ENCODE measurements at regions of chr6 and their contacts with region 1.

Region 1: DNA sequence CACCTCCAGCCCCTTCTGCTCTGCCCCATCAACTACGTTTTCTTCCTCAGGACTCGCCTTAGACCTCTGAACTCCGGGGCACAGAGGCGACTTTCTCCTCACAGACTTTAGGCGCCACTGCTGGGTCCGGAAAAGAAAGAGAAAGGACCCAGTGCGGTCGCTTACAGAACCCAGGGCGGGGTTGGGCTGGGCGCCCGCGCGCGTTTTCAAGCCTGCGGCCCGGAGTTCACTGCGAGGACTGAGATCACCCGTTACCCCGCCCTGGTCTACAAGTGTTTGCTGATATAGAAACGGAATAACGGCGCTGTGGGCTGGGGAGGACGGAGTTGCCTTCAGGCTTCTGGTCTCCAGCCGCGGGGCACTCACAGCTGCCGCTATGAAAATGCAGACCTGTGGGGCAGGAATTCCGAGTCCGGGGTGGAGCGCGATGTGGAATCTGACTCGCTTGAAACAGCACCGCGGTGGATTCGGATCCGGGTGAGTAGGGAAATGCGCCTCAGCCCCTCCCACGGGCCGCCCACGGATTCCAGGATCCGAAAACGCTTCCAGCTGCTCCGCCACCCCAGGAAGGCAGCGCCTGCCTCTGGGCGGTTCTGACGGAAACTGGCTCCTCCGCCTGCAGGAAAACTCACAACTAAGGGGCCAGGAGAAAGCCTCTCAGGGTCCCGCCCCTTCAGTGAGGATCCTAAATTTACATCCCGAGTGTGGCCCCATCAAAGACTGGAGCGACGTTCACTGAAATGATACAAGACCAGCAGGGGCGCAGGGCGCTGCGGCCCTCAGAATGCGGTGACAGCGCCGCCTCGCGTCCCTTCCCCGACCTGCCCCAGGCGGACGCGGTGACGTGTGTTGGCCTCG is 29.4 kb downstream of the HLA-F start:
- DNase-seq: peak; percentile 84
- ATAC-seq: peak; percentile 80
- H3K4me3 ChIP-seq: peak overlapping the region; percentile 50
- H3K27ac ChIP-seq: peak overlapping the region; percentile 66
- H3K4me1 ChIP-seq: peaks cover 2% of the 10 kb centered on the region; the same call in 1 of the 2 replicates
- H3K27me3 ChIP-seq: peaks cover 19% of the 10 kb centered on the region
- CTCF ChIP-seq: peak; percentile 99
- POLR2A ChIP-seq: peak; percentile 26; the same call in 1 of the 2 replicates
- RAD21 ChIP-seq: peak; percentile 68

Region 2: GRCh38 chr6:29632789-29633533 is 119.7 kb before region 1 on chr6 and contains the start of gene GABBR1:
- CTCF ChIA-PET with region 1: no interaction called
- POLR2A ChIA-PET with region 1: no interaction called
- dilution Hi-C with region 1: no loop called
- in situ Hi-C with region 1: no loop called
- intact Hi-C with region 1: loop called (anchors 5 kb)
- DNase-seq: peak; percentile 79
- ATAC-seq: peak; percentile 90
- H3K4me3 ChIP-seq: peak within 1 kb of the TSS; percentile 77
- H3K27ac ChIP-seq: peak within 1 kb of the TSS; percentile 62
- H3K4me1 ChIP-seq: peaks cover 11% of the 10 kb centered on the region
- H3K27me3 ChIP-seq: no peaks in the 10 kb centered on the region
- CTCF ChIP-seq: no peak
- POLR2A ChIP-seq: no peak
- RAD21 ChIP-seq: no peak
- total RNA-seq, gene GABBR1: 5.9 and 6.9 TPM in 2 replicates

Region 3: GRCh38 chr6:29649701-29650673 is 102.7 kb before region 1 on chr6:
- CTCF ChIA-PET with region 1: interaction called, 5 read pairs
- POLR2A ChIA-PET with region 1: no interaction called
- dilution Hi-C with region 1: no loop called
- in situ Hi-C with region 1: no loop called
- intact Hi-C with region 1: loop called (anchors 1 kb)
- DNase-seq: peak; percentile 94
- ATAC-seq: peak; percentile 97
- H3K4me3 ChIP-seq: peak overlapping the region; percentile 50
- H3K27ac ChIP-seq: peak overlapping the region; percentile 19; the same call in 1 of the 2 replicates
- H3K4me1 ChIP-seq: no peaks in the 10 kb centered on the region
- H3K27me3 ChIP-seq: peaks cover 1% of the 10 kb centered on the region
- CTCF ChIP-seq: peak; percentile 98
- POLR2A ChIP-seq: 0 out of 2 replicates have a peak, but pooled peaks have one; percentile 29
- RAD21 ChIP-seq: peak; percentile 21; the same call in 1 of the 2 replicates

Region 4: GRCh38 chr6:29705389-29706231 is 47.1 kb before region 1 on chr6:
- CTCF ChIA-PET with region 1: interaction called, 4 read pairs
- POLR2A ChIA-PET with region 1: no interaction called
- dilution Hi-C with region 1: no loop called
- in situ Hi-C with region 1: no loop called
- intact Hi-C with region 1: loop called (anchors 1 kb)
- DNase-seq: peak; percentile 53
- ATAC-seq: peak; percentile 97
- H3K4me3 ChIP-seq: no peak overlapping the region
- H3K27ac ChIP-seq: no peak overlapping the region
- H3K4me1 ChIP-seq: no peaks in the 10 kb centered on the region
- H3K27me3 ChIP-seq: peaks cover 13% of the 10 kb centered on the region
- CTCF ChIP-seq: peak; percentile 70
- POLR2A ChIP-seq: no peak
- RAD21 ChIP-seq: peak; percentile 74

Region 5: DNA sequence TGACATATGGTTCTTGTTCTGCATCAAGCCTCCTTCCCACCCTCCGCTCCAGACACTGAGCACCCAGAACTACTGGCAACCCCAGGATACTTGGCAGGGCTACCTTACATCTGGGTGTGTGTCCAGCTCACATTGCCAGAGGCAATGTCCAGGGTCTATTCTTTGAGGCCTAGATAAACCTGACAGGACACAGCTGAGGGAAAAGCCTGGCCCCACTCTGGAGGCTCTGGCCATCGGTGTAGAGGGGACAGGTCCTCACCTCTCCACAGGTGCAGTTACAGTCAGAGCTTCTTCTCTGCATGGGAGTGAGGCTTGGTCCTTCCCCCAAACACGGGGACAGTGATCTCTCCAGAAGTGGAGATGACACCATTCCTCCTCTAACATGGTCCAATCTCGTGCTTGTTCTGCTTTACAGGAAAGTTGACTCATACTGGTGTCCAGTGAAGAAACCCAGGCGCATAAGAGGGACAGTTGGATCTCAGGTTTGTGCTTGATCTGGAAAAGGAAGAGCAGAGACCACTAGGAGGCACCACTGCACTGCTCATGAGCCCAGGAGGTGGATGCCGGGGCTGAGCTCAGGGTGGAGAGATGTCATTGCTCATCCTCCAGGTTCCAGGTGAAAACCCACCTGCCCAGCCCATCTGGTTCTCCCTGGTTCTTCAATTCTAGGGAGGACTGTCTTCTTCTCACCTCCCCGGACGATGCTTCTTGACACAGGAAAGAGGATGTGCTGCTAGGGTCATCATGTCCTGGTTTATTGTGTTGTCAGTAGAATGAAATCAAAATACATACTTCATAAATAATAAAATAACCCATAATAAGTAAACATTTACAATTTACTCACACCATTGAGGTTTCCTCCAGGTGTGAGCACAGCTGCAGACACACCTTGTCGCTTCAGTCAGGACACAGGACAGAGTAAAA is 14.7 kb before region 1 on chr6:
- CTCF ChIA-PET with region 1: interaction called, 5 read pairs
- POLR2A ChIA-PET with region 1: no interaction called
- dilution Hi-C with region 1: no loop called
- in situ Hi-C with region 1: no loop called
- intact Hi-C with region 1: loop called (anchors 1 kb)
- DNase-seq: peak; percentile 66
- ATAC-seq: peak; percentile 76
- H3K4me3 ChIP-seq: no peak overlapping the region
- H3K27ac ChIP-seq: no peak overlapping the region
- H3K4me1 ChIP-seq: peaks cover 5% of the 10 kb centered on the region; the same call in 1 of the 2 replicates
- H3K27me3 ChIP-seq: no peaks in the 10 kb centered on the region; the same call in 1 of the 2 replicates
- CTCF ChIP-seq: peak; percentile 71
- POLR2A ChIP-seq: no peak
- RAD21 ChIP-seq: peak; percentile 77

Region 6: DNA sequence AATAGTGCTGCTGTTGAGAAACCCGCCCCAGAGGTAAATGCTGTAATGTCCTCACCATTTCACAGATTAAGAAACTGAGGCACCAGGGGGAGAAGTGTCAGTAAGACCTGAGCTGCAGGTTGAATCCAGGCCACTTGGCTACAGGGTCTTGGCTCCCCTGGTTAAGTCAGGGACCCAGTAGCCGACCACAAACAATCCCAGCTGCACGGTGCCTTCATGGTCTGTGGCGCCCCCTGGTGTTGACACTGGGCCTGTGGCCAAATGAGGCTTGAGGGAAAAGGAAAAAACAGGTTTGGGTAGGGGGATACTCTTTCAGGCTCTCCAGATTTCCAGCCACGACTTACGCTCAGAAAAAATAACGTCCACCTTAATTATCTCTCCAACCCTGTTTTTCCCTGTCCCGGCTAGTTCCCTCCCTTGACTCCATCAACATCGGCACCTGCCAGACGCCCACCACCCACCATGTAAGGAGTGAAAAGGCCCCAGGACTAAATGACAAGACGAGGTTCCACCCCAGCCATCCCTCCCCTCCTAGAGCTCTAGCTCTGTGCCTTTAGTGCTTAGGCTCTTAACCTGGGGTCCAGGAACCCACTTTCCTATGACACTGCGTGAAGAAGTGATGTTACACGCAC is 260.7 kb after region 1 on chr6:
- CTCF ChIA-PET with region 1: no interaction called
- POLR2A ChIA-PET with region 1: no interaction called
- dilution Hi-C with region 1: no loop called
- in situ Hi-C with region 1: loop called (anchors 25 kb)
- intact Hi-C with region 1: no loop called
- DNase-seq: no peak
- ATAC-seq: peak; percentile 64; the same call in 1 of the 2 replicates
- H3K4me3 ChIP-seq: no peak overlapping the region
- H3K27ac ChIP-seq: no peak overlapping the region
- H3K4me1 ChIP-seq: no peaks in the 10 kb centered on the region
- H3K27me3 ChIP-seq: peaks cover 4% of the 10 kb centered on the region
- CTCF ChIP-seq: peak; percentile 70
- POLR2A ChIP-seq: no peak
- RAD21 ChIP-seq: peak; percentile 83